A549 (cell line): ENCODE measurements at regions of chr19 and their contacts with region 1.

Region 1: GRCh38 chr19:36128392-36128736 is 11.5 kb upstream of the CAPNS1 start:
- DNase-seq: no peak
- ATAC-seq: peak; percentile 29 to 36; a peak in 5 of 6 replicates
- H3K4me3 ChIP-seq: peak overlapping the region; percentile 52
- H3K27ac ChIP-seq: peak overlapping the region; percentile 85 to 88
- H3K4me1 ChIP-seq: peaks cover 30% of the 10 kb centered on the region
- CTCF ChIP-seq: no peak
- EP300 ChIP-seq: no peak
- POLR2A ChIP-seq: no peak
- RAD21 ChIP-seq: no peak

Region 2: GRCh38 chr19:35966771-35967170 is 161.6 kb before region 1 on chr19:
- CTCF ChIA-PET with region 1: no interaction called
- POLR2A ChIA-PET with region 1: no interaction called
- DNase-seq: no peak
- ATAC-seq: no peak
- H3K4me3 ChIP-seq: no peak overlapping the region
- H3K27ac ChIP-seq: no peak overlapping the region
- H3K4me1 ChIP-seq: no peaks in the 10 kb centered on the region
- CTCF ChIP-seq: no peak
- EP300 ChIP-seq: no peak
- POLR2A ChIP-seq: no peak
- RAD21 ChIP-seq: no peak

Region 3: DNA sequence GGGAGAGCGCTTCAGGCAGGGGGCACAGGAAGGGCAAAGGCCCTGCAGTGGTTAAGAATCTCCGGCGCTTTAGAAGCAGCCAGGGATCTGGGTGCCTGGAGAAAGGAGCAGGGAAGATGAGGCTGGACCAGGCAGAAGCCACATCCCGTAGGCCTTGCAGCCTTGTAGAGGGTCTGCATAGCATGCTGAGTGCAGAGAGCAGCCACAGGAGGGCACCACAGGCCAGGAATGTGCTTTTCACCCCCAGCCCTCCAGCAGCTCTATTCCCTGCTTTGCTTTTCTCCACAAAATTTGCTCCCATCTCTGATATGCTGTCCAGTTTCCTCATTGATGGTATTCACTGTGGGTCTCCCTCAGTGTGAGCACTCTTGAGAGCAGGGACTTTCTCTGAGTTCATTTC is 67.9 kb before region 1 on chr19:
- CTCF ChIA-PET with region 1: interaction called, 39 read pairs
- POLR2A ChIA-PET with region 1: interaction called, 3 read pairs
- DNase-seq: peak; percentile 68 to 90
- ATAC-seq: peak; percentile 84 to 90
- H3K4me3 ChIP-seq: no peak overlapping the region
- H3K27ac ChIP-seq: no peak overlapping the region
- H3K4me1 ChIP-seq: peaks cover 15% of the 10 kb centered on the region
- CTCF ChIP-seq: peak; percentile 77
- EP300 ChIP-seq: no peak
- POLR2A ChIP-seq: no peak
- RAD21 ChIP-seq: peak; percentile 80 to 84

Region 4: GRCh38 chr19:36093146-36093662 is 35.2 kb before region 1 on chr19:
- CTCF ChIA-PET with region 1: interaction called, 10 read pairs
- POLR2A ChIA-PET with region 1: no interaction called
- DNase-seq: no peak
- ATAC-seq: no peak
- H3K4me3 ChIP-seq: no peak overlapping the region
- H3K27ac ChIP-seq: no peak overlapping the region
- H3K4me1 ChIP-seq: no peaks in the 10 kb centered on the region
- CTCF ChIP-seq: no peak
- EP300 ChIP-seq: no peak
- POLR2A ChIP-seq: no peak
- RAD21 ChIP-seq: no peak

Region 5: GRCh38 chr19:36114763-36115452 is 13.5 kb before region 1 on chr19 and contains the start of gene POLR2I:
- CTCF ChIA-PET with region 1: interaction called, 82 read pairs
- POLR2A ChIA-PET with region 1: interaction called, 65 read pairs
- DNase-seq: peak; percentile 100
- ATAC-seq: peak; percentile 85 to 96
- H3K4me3 ChIP-seq: peak within 1 kb of the TSS; percentile 75
- H3K27ac ChIP-seq: peak within 1 kb of the TSS; percentile 89 to 91
- H3K4me1 ChIP-seq: peaks cover 25% of the 10 kb centered on the region
- CTCF ChIP-seq: no peak
- EP300 ChIP-seq: no peak
- POLR2A ChIP-seq: peak; percentile 89
- RAD21 ChIP-seq: no peak
- polyA plus RNA-seq, gene POLR2I: 107 and 123 TPM in 2 replicates

Region 6: DNA sequence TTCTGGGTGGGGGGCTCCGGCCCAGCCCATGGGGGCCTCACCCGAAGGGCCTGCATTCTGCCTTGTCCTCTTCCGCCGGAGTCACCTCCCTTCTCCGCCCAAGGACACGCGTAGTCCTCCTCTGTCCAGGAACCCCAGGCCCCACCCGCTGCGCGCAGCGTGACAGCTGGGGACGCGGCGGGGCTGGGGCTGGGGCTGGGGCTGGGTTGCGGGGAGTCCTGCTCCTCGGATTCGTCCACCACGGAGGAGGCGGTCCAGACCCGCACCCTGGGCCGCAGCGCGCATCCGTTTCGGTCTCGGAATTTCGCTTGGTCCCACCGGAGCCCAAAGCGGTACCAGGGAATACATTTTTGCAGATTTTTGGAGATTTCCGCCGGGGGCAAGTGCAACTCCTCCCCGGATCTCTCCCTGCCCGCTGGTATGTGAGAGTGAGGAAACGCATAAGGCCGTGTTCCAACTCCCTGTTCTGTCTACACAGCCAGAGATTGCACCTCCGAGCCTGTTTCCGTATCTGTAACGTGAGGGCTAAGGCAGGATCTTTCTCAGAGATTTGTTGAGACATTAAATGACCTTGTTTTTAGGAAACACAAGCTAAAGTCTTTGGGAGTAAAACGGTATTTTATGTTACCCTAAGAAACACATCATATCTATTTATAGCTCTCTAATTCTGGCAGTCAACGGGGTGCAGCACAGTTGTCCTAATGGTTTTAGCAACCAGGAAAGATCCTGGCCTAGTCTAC is 24.2 kb after region 1 on chr19 and contains the start of gene COX7A1:
- CTCF ChIA-PET with region 1: interaction called, 67 read pairs
- POLR2A ChIA-PET with region 1: interaction called, 5 read pairs
- DNase-seq: no peak
- ATAC-seq: peak in 1 of 2 experiments; percentile 5; a peak in 1 of 6 replicates
- H3K4me3 ChIP-seq: no peak within 1 kb of the TSS
- H3K27ac ChIP-seq: no peak within 1 kb of the TSS
- H3K4me1 ChIP-seq: no peaks in the 10 kb centered on the region
- CTCF ChIP-seq: no peak
- EP300 ChIP-seq: no peak
- POLR2A ChIP-seq: no peak
- RAD21 ChIP-seq: no peak
- polyA plus RNA-seq, gene COX7A1: not detected in 2 replicates

Region 7: DNA sequence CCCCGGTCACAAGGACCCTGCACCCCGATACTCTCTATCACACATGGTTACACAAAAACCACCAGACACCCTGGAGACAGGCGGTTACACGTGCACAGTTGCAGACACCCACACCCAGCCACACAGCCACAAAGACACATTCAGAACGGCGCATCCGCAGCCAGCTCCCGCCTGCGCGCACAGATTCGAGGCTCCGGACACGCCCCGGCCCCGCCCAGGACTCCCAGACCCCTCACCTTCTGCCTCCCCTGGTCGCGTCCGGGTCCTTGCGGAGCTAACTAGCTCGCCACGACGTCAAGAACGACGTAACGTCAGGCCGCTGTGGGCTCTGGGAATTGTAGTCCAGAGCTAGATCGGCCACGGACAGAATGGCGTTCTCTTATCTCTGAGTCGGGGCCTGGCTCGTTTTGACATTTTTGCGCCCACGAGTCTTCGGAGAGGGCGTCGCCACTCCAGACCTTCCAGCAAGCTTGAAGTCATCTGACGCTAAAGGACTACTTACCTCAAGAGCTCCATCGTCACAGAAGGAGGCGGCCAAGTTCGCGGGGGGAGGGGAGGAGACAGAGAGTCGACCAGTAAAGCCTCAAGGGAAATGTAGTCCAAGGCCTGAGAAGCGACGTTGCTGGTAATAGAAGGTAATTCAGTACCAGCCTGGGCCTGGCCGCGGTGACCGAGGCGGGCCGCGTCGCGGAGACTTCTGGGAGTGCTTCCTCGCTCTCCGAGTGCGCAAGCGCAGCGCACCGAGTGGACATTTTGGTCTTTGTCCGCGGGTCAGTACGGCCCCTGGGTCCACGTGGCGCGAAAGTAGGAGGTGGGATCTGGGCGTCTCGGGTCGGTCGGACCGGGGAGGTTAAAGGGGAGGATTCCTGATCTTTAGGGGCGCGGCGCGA is 86.3 kb after region 1 on chr19 and contains the starts of genes ZNF146 and ZNF565:
- CTCF ChIA-PET with region 1: interaction called, 10 read pairs
- POLR2A ChIA-PET with region 1: interaction called, 23 read pairs
- DNase-seq: peak; percentile 100
- ATAC-seq: peak; percentile 95 to 96
- H3K4me3 ChIP-seq: peak within 1 kb of the TSS; percentile 63
- H3K27ac ChIP-seq: peak within 1 kb of the TSS; percentile 87 to 91
- H3K4me1 ChIP-seq: 0 out of 3 replicates have a peak, but pooled peaks cover 3% of the 10 kb centered on the region
- CTCF ChIP-seq: no peak
- EP300 ChIP-seq: no peak
- POLR2A ChIP-seq: peak; percentile 97
- RAD21 ChIP-seq: no peak
- polyA plus RNA-seq, gene ZNF146: 293 and 362 TPM in 2 replicates
- polyA plus RNA-seq, gene ZNF565: 5.6 and 6.8 TPM in 2 replicates

Region 8: GRCh38 chr19:36489118-36489919 is 361.0 kb after region 1 on chr19 and contains the start of gene ZNF566:
- CTCF ChIA-PET with region 1: interaction called, 7 read pairs
- POLR2A ChIA-PET with region 1: interaction called, 11 read pairs
- DNase-seq: peak; percentile 100
- ATAC-seq: peak; percentile 97 to 98
- H3K4me3 ChIP-seq: peak within 1 kb of the TSS; percentile 52
- H3K27ac ChIP-seq: peak within 1 kb of the TSS; percentile 89
- H3K4me1 ChIP-seq: peaks cover 4% of the 10 kb centered on the region; the same call in 1 of the 3 replicates
- CTCF ChIP-seq: no peak
- EP300 ChIP-seq: no peak
- POLR2A ChIP-seq: peak; percentile 67
- RAD21 ChIP-seq: no peak
- polyA plus RNA-seq, gene ZNF566: 12.6 and 13.0 TPM in 2 replicates